ENCODE measurements at regions of chr1 and their contacts with region 1.

Region 1: GRCh38 chr1:178749581-178750166 is 24.6 kb downstream of the RALGPS2 start:
- DNase-seq: no peak
- H3K4me3 ChIP-seq: no peak overlapping the region
- H3K27ac ChIP-seq: peak overlapping the region in 1 of 8 donors; percentile 49
- H3K4me1 ChIP-seq: peaks cover 0 to 20% (median 0%) of the 10 kb centered on the region in 6 donors
- H3K27me3 ChIP-seq: no peaks in the 10 kb centered on the region
- CTCF ChIP-seq: no peak
- POLR2A ChIP-seq: no peak

Region 2: DNA sequence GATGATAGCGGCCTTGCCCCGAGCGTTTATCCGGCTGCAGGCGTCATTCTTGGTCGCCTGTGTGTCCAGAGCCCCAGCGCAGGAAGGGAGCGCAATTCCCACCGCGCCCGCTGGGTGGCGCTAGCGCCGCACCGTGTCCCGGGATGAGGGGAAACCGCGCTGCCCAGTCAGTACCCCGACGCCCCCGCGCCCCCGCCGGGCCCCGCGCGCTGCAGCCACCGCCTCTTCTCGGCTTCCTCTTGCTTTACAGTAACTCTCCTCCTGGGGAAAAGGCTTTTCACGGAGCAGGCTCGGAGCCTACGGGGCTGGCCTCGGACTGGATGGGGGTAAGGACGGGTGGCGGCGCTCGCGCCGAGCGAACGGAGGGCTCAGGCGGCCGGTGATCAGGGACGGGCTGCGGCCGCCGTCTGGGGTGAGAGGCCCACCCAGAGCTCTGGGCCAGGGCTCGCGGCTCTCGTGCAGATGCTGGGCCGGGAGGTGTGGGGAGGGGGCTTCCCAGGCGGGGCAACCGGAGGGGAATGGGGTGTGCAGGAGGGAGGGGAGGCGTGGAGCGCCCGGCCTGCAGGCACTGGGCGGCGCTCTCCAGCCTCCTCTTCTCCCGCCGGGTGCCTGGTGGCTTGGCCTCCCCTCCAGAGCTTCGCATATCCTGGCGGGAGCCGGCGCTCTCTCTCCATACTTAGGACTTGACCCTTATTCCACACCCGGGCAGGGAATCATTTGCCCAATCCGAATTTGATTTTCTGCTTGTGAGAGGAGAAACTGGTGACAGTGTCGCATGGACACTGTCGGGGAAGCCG is 206.9 kb before region 1 on chr1:
- intact Hi-C with region 1: loop called (anchors 5 kb)
- DNase-seq: peak; percentile 97
- H3K4me3 ChIP-seq: peak overlapping the region; percentile 69 to 90 (median 76)
- H3K27ac ChIP-seq: peak overlapping the region; percentile 64 to 91 (median 84)
- H3K4me1 ChIP-seq: peaks cover 2 to 53% (median 32%) of the 10 kb centered on the region in 6 donors
- H3K27me3 ChIP-seq: no peaks in the 10 kb centered on the region
- CTCF ChIP-seq: peak; percentile 95 to 99 (median 98)
- POLR2A ChIP-seq: no peak

Region 3: DNA sequence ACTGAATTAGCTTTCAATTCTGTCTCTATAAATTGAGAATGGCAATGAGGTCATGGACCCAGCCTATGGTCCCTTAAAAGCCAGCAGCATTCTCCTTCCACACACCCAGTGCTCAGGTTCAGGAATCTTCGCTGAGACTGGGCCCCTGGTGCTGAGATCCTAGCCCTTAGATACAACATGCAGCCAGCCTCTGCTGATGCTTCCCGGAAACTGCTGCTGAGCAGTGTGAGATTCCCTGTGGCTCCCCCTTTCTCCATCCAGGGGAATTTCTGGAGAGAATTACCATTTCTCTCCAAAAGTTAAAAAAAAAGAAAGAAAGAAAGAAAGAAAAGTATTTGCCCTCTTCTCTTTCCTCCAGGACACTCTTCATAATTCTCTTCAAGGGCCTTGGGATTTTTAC is 56.3 kb before region 1 on chr1:
- intact Hi-C with region 1: no loop called
- DNase-seq: no peak
- H3K4me3 ChIP-seq: no peak overlapping the region
- H3K27ac ChIP-seq: no peak overlapping the region
- H3K4me1 ChIP-seq: peaks cover 0 to 8% (median 0%) of the 10 kb centered on the region in 6 donors
- H3K27me3 ChIP-seq: no peaks in the 10 kb centered on the region
- CTCF ChIP-seq: no peak
- POLR2A ChIP-seq: no peak

Measured in spleen (tissue), 13 donors.